A549 (cell line): ENCODE measurements at regions of chr5 and their contacts with region 1.

Region 1: GRCh38 chr5:140926443-140927227 is 536 bp downstream of the PCDHAC1 start:
- DNase-seq: peak; percentile 76 to 84
- ATAC-seq: peak; percentile 98 to 99
- H3K4me3 ChIP-seq: peak overlapping the region; percentile 53
- H3K27ac ChIP-seq: peak overlapping the region; percentile 54 to 80
- H3K4me1 ChIP-seq: 0 out of 3 replicates have a peak, but pooled peaks cover 4% of the 10 kb centered on the region
- CTCF ChIP-seq: peak; percentile 85
- EP300 ChIP-seq: no peak
- POLR2A ChIP-seq: no peak
- RAD21 ChIP-seq: peak; percentile 67 to 81

Region 2: GRCh38 chr5:140806834-140807775 is 119.5 kb before region 1 on chr5 and contains the start of gene PCDHA4:
- CTCF ChIA-PET with region 1: interaction called, 14 read pairs
- POLR2A ChIA-PET with region 1: no interaction called
- DNase-seq: peak; percentile 24 to 74
- ATAC-seq: peak; percentile 97 to 98
- H3K4me3 ChIP-seq: peak within 1 kb of the TSS; percentile 60
- H3K27ac ChIP-seq: peak within 1 kb of the TSS; percentile 66 to 80
- H3K4me1 ChIP-seq: no peaks in the 10 kb centered on the region
- CTCF ChIP-seq: peak; percentile 66
- EP300 ChIP-seq: no peak
- POLR2A ChIP-seq: no peak
- RAD21 ChIP-seq: peak; percentile 67 to 70
- polyA plus RNA-seq, gene PCDHA4: 2.8 and 3.3 TPM in 2 replicates

Region 3: GRCh38 chr5:140875066-140876065 is 51.3 kb before region 1 on chr5 and contains the start of gene PCDHA12:
- CTCF ChIA-PET with region 1: interaction called, 19 read pairs
- POLR2A ChIA-PET with region 1: interaction called, 11 read pairs
- DNase-seq: peak; percentile 67 to 72
- ATAC-seq: peak; percentile 84 to 90
- H3K4me3 ChIP-seq: peak within 1 kb of the TSS; percentile 54
- H3K27ac ChIP-seq: peak within 1 kb of the TSS; percentile 61 to 74
- H3K4me1 ChIP-seq: no peaks in the 10 kb centered on the region
- CTCF ChIP-seq: peak; percentile 68
- EP300 ChIP-seq: no peak
- POLR2A ChIP-seq: no peak
- RAD21 ChIP-seq: peak; percentile 76 to 79
- polyA plus RNA-seq, gene PCDHA12: 2.9 and 3.0 TPM in 2 replicates

Region 4: DNA sequence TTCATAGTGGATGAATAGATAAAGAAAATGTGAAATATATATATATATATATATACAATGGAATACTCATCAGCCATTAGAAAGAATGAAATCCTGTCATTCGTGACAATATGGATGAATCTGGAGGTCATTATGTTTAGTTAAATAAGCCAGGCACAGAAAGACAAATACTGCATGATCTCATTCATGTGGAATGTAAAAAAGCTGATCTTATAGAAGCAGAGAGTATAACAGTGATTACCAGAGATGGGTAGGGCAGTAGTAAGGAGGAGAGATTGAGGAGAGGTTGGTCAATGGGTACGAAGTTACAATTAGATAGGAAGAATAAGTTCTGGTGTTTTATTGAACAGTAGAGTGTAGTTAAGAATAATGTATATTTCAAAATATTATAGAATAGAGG is 19.9 kb after region 1 on chr5:
- CTCF ChIA-PET with region 1: interaction called, 11 read pairs
- POLR2A ChIA-PET with region 1: no interaction called
- DNase-seq: no peak
- ATAC-seq: no peak
- H3K4me3 ChIP-seq: no peak overlapping the region
- H3K27ac ChIP-seq: no peak overlapping the region
- H3K4me1 ChIP-seq: no peaks in the 10 kb centered on the region
- CTCF ChIP-seq: no peak
- EP300 ChIP-seq: no peak
- POLR2A ChIP-seq: no peak
- RAD21 ChIP-seq: no peak

Region 5: DNA sequence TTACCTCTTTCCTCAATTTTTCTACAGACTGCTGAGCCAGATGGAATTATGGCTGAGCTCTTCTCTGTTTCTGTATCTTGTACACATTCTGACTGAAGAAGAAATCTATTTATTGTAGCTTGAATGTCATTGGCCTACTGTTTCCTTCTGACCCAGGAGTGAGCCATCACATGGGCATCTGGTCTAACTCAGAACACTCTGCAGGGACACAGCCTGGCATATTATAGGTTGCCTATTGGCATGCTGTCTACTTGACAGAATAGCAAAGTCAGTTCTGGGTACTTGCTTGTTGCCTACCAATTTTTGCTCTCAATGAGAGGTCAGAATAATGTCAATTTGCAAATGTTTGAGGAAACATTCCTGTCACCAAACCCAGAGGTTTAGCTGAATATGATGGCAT is 46.9 kb after region 1 on chr5:
- CTCF ChIA-PET with region 1: interaction called, 12 read pairs
- POLR2A ChIA-PET with region 1: interaction called, 3 read pairs
- DNase-seq: no peak
- ATAC-seq: no peak
- H3K4me3 ChIP-seq: no peak overlapping the region
- H3K27ac ChIP-seq: no peak overlapping the region
- H3K4me1 ChIP-seq: peaks cover 14% of the 10 kb centered on the region; the same call in 2 of the 3 replicates
- CTCF ChIP-seq: no peak
- EP300 ChIP-seq: no peak
- POLR2A ChIP-seq: no peak
- RAD21 ChIP-seq: no peak

Region 6: DNA sequence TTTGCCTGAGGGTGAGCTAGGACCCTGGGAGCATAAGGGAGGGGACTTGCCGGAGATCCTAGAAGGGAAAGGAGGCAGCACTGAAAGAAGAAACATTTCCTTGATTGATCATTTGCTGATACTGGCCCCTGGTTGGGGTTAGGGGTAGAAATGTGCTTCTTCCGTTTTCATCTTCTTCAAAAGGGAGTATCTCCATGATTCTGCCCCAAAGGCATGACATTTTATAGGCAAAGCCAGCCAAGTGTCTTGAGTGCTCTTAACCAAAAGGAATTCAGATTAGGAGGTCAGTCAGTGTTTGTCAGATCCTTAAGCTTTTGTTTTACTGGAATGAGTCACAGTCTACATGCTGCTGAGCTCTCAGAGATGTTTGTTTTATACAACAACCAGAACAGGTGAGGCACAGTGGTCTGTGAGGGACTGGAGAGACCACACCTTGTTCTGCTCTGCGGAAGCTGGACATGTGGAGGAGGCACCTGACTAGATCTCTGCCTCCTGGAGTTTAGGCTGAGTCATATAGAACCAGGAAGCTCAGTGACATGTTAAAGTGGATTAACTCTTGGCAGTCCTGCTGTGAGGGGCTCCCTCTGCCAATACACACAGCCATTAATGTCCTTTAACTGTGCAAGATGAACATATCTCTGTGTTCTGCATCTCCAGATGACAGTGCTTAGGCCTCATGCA is 77.4 kb after region 1 on chr5:
- CTCF ChIA-PET with region 1: interaction called, 14 read pairs
- POLR2A ChIA-PET with region 1: no interaction called
- DNase-seq: peak; percentile 79 to 88
- ATAC-seq: peak; percentile 88 to 90
- H3K4me3 ChIP-seq: no peak overlapping the region
- H3K27ac ChIP-seq: peak overlapping the region; percentile 76 to 79
- H3K4me1 ChIP-seq: peaks cover 37% of the 10 kb centered on the region
- CTCF ChIP-seq: no peak
- EP300 ChIP-seq: peak; percentile 21 to 56; a peak in 1 of 5 replicates
- POLR2A ChIP-seq: no peak
- RAD21 ChIP-seq: no peak

Region 7: GRCh38 chr5:141040771-141041426 is 114.3 kb after region 1 on chr5:
- CTCF ChIA-PET with region 1: interaction called, 77 read pairs
- POLR2A ChIA-PET with region 1: interaction called, 30 read pairs
- DNase-seq: peak; percentile 89 to 96
- ATAC-seq: peak; percentile 90 to 92
- H3K4me3 ChIP-seq: peak overlapping the region; percentile 48
- H3K27ac ChIP-seq: peak overlapping the region; percentile 56 to 72
- H3K4me1 ChIP-seq: peaks cover 8% of the 10 kb centered on the region; the same call in 1 of the 3 replicates
- CTCF ChIP-seq: peak; percentile 87
- EP300 ChIP-seq: no peak
- POLR2A ChIP-seq: peak; percentile 55
- RAD21 ChIP-seq: peak; percentile 92

Region 8: GRCh38 chr5:141172378-141173204 is 246.0 kb after region 1 on chr5 and contains the start of gene PCDHB7:
- CTCF ChIA-PET with region 1: no interaction called
- POLR2A ChIA-PET with region 1: no interaction called
- DNase-seq: peak; percentile 25 to 31
- ATAC-seq: no peak
- H3K4me3 ChIP-seq: no peak within 1 kb of the TSS
- H3K27ac ChIP-seq: no peak within 1 kb of the TSS
- H3K4me1 ChIP-seq: no peaks in the 10 kb centered on the region
- CTCF ChIP-seq: no peak
- EP300 ChIP-seq: no peak
- POLR2A ChIP-seq: no peak
- RAD21 ChIP-seq: peak; percentile 16 to 46; a peak in 3 of 5 replicates
- polyA plus RNA-seq, gene PCDHB7: 0.04 and 0.08 TPM in 2 replicates

Region 9: DNA sequence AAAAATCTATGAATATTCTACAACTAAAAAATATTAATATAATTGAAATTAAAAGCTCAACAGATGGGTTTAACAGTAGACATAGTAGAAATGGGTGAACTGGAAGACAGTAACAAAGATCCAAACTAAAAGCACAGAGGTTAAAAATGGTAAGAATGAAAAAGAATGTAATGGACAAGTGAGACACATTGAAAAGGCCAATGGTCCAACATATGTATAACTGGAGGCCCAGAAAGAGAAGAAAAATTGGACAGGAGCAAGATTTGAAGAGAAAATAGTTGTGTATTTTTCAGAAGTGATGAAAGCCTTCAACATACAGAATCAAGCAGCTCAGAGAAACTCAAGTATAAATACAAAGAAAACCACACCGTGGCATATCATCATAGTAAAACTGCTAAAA is 620.9 kb after region 1 on chr5:
- CTCF ChIA-PET with region 1: no interaction called
- POLR2A ChIA-PET with region 1: no interaction called
- DNase-seq: peak in 1 of 2 experiments; percentile 67
- ATAC-seq: no peak
- H3K4me3 ChIP-seq: no peak overlapping the region
- H3K27ac ChIP-seq: no peak overlapping the region
- H3K4me1 ChIP-seq: no peaks in the 10 kb centered on the region
- CTCF ChIP-seq: no peak
- EP300 ChIP-seq: no peak
- POLR2A ChIP-seq: no peak
- RAD21 ChIP-seq: no peak